ENCODE measurements at regions of chr6 and their contacts with region 1.

Region 1: GRCh38 chr6:153449279-153449678 is 318.2 kb upstream of the RGS17 start:
- DNase-seq: no peak
- H3K4me3 ChIP-seq: no peak overlapping the region
- CTCF ChIP-seq: no peak
- POLR2A ChIP-seq: no peak

Region 2: DNA sequence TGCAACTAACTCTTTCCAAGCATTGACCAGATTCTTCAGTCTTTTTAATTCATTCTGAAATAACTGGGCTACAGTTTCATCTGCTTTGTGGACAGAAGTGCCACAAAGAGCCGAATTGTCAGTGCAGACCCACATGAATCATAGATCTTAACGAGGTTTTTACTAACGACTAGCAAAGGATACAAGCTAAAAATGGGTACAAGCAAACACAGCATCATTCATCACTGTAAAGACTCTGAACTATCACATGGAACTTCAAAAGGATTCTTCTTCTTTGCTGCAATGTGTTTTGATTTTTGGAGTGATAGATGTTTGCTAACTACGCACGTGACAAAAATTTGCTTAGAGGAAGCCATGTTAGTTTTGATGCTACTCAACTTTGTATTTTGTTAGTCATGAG is 1414.6 kb before region 1 on chr6:
- intact Hi-C with region 1: loop called (anchors 10 kb)
- DNase-seq: no peak
- H3K4me3 ChIP-seq: no peak overlapping the region
- CTCF ChIP-seq: no peak
- POLR2A ChIP-seq: no peak

Region 3: GRCh38 chr6:153852481-153852880 is 403.2 kb after region 1 on chr6:
- intact Hi-C with region 1: no loop called
- DNase-seq: no peak
- H3K4me3 ChIP-seq: no peak overlapping the region
- CTCF ChIP-seq: no peak
- POLR2A ChIP-seq: no peak